ENCODE measurements at regions of chr7 and their contacts with region 1.

Region 1: GRCh38 chr7:43582503-43583423 is at the start of gene STK17A:
- DNase-seq: peak; percentile 91
- H3K4me3 ChIP-seq: peak within 1 kb of the TSS; percentile 89 to 97
- H3K27ac ChIP-seq: peak within 1 kb of the TSS; percentile 85 to 89
- H3K4me1 ChIP-seq: no peaks in the 10 kb centered on the region
- H3K27me3 ChIP-seq: no peaks in the 10 kb centered on the region
- CTCF ChIP-seq: peak; percentile 97 to 100 (median 100)
- POLR2A ChIP-seq: peak; percentile 86
- total RNA-seq, gene STK17A: 6.8 to 8.2 TPM

Region 2: DNA sequence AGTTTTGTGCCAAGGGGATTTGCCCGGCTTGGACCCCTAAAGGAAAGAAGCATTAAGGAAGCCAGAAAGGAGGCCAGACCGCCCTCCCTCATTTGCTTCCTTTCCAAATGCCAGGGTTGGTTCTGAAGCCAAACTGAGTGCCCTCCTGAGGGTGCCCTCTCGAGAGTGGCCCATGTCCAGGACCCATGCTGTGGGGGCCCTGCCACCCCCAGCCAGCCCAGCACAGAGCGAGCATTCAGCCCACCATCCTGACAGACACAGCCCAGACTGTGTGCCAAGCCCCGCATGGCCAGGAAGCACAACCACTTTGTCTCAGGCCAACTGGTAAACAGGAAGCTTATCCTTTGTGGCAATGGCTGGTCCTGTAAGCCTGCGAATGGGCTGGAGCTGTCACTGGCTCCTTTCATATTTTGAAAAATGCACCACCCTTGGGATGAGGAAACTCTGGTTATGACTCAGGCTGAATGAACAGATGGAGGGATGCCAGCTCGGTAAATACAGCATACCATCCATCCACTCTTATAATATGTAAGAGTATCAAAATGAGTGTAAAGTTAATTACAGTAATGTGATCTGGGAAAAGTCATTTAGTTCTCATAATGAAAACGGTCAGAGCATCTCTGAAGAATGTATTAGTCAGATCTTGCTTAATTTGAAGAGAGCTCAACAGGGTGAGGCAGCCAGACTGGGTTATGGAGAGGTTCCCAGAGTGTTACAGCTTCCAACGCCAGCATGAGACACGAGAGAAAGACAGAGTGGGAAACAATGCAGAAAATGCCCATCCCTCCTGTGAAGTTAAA is 65.1 kb after region 1 on chr7:
- intact Hi-C with region 1: loop called (anchors 2 kb)
- DNase-seq: peak; percentile 77
- H3K4me3 ChIP-seq: no peak overlapping the region
- H3K27ac ChIP-seq: peak overlapping the region; percentile 72 to 83
- H3K4me1 ChIP-seq: peaks cover 9% of the 10 kb centered on the region
- H3K27me3 ChIP-seq: no peaks in the 10 kb centered on the region
- CTCF ChIP-seq: no peak
- POLR2A ChIP-seq: no peak

Region 3: GRCh38 chr7:43700059-43700501 is 117.3 kb after region 1 on chr7:
- intact Hi-C with region 1: loop called (anchors 1 kb)
- DNase-seq: no peak
- H3K4me3 ChIP-seq: no peak overlapping the region
- H3K27ac ChIP-seq: no peak overlapping the region
- H3K4me1 ChIP-seq: no peaks in the 10 kb centered on the region
- H3K27me3 ChIP-seq: no peaks in the 10 kb centered on the region
- CTCF ChIP-seq: peak; percentile 35 to 85 (median 76)
- POLR2A ChIP-seq: no peak

Region 4: DNA sequence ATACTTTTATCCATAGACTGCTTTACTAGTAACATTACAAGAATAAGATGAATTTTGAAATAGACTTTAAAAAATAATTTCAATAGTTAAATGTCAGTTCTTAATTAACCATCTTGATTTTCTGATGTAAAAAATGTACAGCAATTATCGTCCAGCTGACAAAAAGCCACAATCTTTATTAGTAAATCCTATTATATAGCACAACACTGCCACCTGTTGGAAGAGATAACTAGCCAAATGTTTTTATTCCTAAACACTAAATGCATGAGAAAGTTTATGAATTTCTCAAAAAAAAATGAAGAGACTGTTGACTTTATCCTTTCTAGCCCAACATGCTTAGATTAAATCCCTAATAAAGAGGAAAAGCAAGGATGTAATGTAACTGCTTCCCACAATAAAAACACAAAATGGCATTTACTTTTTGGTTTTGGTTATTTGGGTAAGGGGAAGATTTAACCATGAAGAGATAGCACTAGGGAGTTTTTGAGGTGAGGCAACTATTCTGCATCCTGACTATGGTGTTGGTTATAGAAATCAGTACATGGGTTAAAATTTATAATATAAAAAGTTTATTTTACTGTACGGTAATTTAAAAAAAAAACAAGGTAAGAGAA is 138.5 kb after region 1 on chr7:
- intact Hi-C with region 1: loop called (anchors 2 kb)
- DNase-seq: peak; percentile 29
- H3K4me3 ChIP-seq: no peak overlapping the region
- H3K27ac ChIP-seq: no peak overlapping the region
- H3K4me1 ChIP-seq: no peaks in the 10 kb centered on the region
- H3K27me3 ChIP-seq: no peaks in the 10 kb centered on the region
- CTCF ChIP-seq: peak; percentile 43 to 80 (median 73)
- POLR2A ChIP-seq: no peak

Region 5: DNA sequence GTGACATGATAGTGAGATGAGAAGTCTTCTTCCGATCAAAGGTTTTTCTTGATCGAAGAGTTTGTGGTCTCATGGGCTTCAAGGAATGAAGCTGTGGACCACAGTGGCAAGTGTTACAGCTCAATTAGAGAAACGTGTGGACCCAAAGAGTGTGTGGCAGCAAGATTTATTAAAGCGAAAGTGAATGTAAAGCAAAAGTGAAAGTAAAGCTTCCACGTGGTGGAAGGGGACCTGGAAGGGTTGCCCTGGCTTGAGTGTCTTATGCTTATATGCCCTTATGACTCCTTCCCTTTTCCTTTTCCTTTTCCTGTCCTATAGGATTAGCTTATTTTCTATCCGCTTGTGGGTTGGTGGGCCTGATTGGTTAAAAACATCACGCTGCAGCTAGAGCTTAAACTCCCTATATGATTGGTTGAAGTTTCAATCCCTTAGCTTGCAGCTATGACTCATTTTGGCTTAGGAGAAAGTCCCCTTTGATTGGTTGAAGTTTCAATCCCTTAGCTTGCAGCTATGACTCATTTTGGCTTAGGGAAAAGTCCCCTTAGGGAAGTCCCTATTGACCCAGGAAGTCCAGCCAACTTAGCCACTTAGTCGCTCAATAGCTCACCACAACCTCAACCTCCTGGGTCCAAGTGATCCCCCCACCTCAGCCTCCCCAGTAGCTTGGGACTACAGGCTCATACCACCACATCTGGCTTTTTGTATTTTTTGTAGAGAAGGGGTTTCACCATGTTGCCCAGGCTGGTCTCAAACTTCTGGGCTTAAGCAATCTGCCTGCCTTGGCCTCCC is 251.9 kb after region 1 on chr7:
- intact Hi-C with region 1: loop called (anchors 1 kb)
- DNase-seq: no peak
- H3K4me3 ChIP-seq: no peak overlapping the region
- H3K27ac ChIP-seq: no peak overlapping the region
- H3K4me1 ChIP-seq: no peaks in the 10 kb centered on the region
- H3K27me3 ChIP-seq: no peaks in the 10 kb centered on the region
- CTCF ChIP-seq: no peak
- POLR2A ChIP-seq: no peak